WTC11 (cell line): ENCODE measurements at regions of chr1 and their contacts with region 1.

Region 1: DNA sequence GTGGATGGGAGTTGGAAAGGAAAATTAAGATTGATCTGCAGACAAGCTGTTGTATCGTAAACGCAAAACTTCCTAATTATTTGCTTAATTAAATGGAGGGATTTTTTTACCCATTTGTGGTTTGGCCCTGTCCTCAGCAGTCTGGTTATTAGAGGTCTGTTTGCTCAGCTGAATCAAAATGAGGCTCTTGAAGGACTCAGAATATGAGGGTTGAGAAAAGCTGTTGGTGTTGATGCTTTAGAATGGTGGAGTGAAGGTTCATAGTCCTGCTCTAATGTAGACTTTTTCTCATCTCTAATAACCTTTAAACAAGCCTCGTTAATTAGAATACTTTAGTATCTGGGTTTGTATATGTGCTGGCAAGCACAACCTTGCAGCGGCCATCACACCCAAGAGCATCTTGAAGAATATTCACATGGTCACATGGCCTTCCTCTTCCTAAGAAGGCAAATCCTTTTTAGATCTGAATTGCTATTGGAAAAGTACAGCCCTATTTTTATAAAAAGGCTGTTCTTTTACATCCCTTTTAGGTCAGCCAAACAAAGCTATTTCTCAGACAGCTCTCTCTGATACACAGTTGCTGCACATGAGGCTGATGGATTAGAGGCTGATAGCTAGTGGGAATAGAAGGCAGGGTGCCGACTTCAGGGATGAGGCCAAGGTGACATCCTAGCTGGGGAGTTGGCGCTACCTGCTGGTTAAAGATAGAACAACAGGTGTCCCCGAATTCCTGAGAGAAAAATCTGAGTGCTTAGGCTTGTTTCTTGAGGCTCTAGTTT is 53.8 kb downstream of the MACF1 start:
- DNase-seq: peak; percentile 82
- ATAC-seq: peak; percentile 90
- H3K4me3 Mint-ChIP-seq: no peak overlapping the region
- H3K27ac Mint-ChIP-seq: peak overlapping the region; percentile 91
- H3K4me1 Mint-ChIP-seq: peaks cover 14% of the 10 kb centered on the region
- H3K27me3 Mint-ChIP-seq: no peaks in the 10 kb centered on the region
- CTCF ChIP-seq: peak; percentile 86

Region 2: GRCh38 chr1:39105061-39105840 is 153.1 kb before region 1 on chr1:
- CTCF ChIA-PET with region 1: interaction called, 13 read pairs
- POLR2A ChIA-PET with region 1: interaction called, 4 read pairs
- DNase-seq: peak; percentile 70
- ATAC-seq: peak; percentile 19
- H3K4me3 Mint-ChIP-seq: peak overlapping the region; percentile 71
- H3K27ac Mint-ChIP-seq: no peak overlapping the region
- H3K4me1 Mint-ChIP-seq: peaks cover 40% of the 10 kb centered on the region
- H3K27me3 Mint-ChIP-seq: no peaks in the 10 kb centered on the region
- CTCF ChIP-seq: no peak

Region 3: GRCh38 chr1:39183503-39184353 is 74.6 kb before region 1 on chr1:
- CTCF ChIA-PET with region 1: interaction called, 15 read pairs
- POLR2A ChIA-PET with region 1: no interaction called
- DNase-seq: peak; percentile 52
- ATAC-seq: peak; percentile 94
- H3K4me3 Mint-ChIP-seq: no peak overlapping the region
- H3K27ac Mint-ChIP-seq: peak overlapping the region; percentile 65
- H3K4me1 Mint-ChIP-seq: peaks cover 46% of the 10 kb centered on the region
- H3K27me3 Mint-ChIP-seq: no peaks in the 10 kb centered on the region
- CTCF ChIP-seq: no peak

Region 4: DNA sequence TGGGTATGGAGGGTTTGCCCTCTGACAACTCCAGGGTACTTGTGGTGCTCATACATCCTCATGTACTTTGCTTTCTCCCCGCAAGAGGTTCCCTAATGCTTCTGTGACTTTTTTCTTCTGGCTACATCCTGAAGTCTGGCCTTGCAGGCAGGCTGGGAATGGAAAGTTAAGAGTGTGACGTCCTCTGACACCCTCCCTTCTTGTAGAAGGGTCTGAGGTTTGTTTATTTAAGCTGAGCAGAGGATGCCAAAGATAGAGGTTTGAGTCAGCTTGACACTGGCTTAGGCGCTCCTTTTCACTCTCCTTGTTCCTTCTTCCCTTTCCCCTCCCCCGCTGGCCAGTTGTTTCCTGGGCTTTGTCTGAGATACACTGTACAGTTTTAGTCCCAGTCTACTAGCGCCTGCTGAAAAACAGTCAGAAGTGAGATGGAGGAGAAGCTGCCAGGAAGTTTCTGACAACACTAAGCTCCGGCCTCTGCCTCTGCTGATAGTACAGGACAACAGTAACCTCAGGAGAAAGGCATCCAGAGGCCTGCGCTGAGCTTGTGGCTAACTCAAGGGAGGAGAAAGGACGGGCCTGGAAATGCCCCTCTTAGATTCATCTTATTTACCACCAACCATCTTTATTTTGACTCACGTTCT is 53.8 kb before region 1 on chr1 and contains the start of gene MACF1:
- CTCF ChIA-PET with region 1: interaction called, 16 read pairs
- POLR2A ChIA-PET with region 1: no interaction called
- DNase-seq: no peak
- ATAC-seq: peak; percentile 83
- H3K4me3 Mint-ChIP-seq: peak within 1 kb of the TSS; percentile 3; the same call in 1 of the 2 replicates
- H3K27ac Mint-ChIP-seq: peak within 1 kb of the TSS; percentile 93
- H3K4me1 Mint-ChIP-seq: peaks cover 31% of the 10 kb centered on the region
- H3K27me3 Mint-ChIP-seq: no peaks in the 10 kb centered on the region
- CTCF ChIP-seq: no peak
- total RNA-seq, gene MACF1: 214 to 327 TPM (median 222 TPM) in 3 replicates

Region 5: DNA sequence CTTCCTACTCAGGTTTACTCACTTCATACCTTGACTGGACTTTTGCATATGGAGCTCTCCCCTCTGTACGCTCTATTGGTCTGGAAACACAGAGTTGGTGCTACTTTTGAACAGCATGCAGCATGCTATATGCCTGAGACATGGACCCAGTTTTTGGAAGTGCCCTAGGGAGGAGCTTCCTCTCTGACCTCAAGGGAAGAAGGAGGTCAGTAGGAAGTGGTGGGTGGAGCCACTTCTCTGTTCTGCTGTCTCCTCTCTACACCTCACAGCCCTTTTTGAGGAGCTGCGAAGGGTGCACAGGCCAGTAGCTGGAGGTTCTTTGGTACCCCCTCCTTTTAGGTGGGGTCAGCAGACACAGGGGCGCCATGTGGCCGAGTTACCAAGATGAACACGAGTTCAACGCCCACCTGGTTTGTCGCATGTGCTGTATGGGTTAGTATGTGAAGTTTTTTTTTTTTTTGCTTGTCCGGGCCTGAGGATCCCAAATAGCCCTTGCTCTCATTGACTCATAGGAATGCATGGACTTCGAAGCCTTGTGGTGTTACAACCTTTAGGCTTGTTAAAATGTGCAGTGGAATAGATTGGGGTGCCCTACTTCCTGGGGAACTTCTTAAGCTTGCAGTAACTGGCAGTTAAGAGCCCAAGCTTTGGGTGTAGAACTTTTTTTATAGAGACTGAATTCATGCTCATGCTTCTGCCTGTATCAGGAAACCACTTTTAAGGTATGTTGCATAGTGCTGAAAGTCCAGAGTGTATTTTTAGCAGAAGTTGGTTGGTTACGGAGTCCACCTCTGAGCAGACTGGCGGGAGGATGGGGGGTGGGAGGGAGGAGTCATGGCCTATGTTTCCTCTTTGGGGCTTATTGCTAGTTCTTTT is 43.1 kb before region 1 on chr1:
- CTCF ChIA-PET with region 1: interaction called, 15 read pairs
- POLR2A ChIA-PET with region 1: no interaction called
- DNase-seq: no peak
- ATAC-seq: peak; percentile 59
- H3K4me3 Mint-ChIP-seq: no peak overlapping the region
- H3K27ac Mint-ChIP-seq: peak overlapping the region; percentile 68
- H3K4me1 Mint-ChIP-seq: peaks cover 46% of the 10 kb centered on the region
- H3K27me3 Mint-ChIP-seq: no peaks in the 10 kb centered on the region
- CTCF ChIP-seq: no peak

Region 6: GRCh38 chr1:39230261-39231190 is 27.8 kb before region 1 on chr1:
- CTCF ChIA-PET with region 1: interaction called, 12 read pairs
- POLR2A ChIA-PET with region 1: no interaction called
- DNase-seq: no peak
- ATAC-seq: peak; percentile 90
- H3K4me3 Mint-ChIP-seq: peak overlapping the region; percentile 37
- H3K27ac Mint-ChIP-seq: peak overlapping the region; percentile 80
- H3K4me1 Mint-ChIP-seq: peaks cover 44% of the 10 kb centered on the region
- H3K27me3 Mint-ChIP-seq: no peaks in the 10 kb centered on the region
- CTCF ChIP-seq: no peak